Activated CD8-positive, alpha-beta T cell treated with anti-CD3 and anti-CD28 coated beads for 36 hours (primary cell): ENCODE measurements at regions of chr1 and their contacts with region 1.

Region 1: GRCh38 chr1:119885903-119886783 is 10.2 kb downstream of the ADAM30 start:
- DNase-seq: peak; percentile 79
- ATAC-seq: peak; percentile 80
- H3K4me3 Mint-ChIP-seq: no peak overlapping the region
- H3K27ac Mint-ChIP-seq: no peak overlapping the region
- H3K4me1 Mint-ChIP-seq: no peaks in the 10 kb centered on the region
- H3K27me3 Mint-ChIP-seq: peaks cover 15% of the 10 kb centered on the region
- CTCF ChIP-seq: peak; percentile 89

Region 2: DNA sequence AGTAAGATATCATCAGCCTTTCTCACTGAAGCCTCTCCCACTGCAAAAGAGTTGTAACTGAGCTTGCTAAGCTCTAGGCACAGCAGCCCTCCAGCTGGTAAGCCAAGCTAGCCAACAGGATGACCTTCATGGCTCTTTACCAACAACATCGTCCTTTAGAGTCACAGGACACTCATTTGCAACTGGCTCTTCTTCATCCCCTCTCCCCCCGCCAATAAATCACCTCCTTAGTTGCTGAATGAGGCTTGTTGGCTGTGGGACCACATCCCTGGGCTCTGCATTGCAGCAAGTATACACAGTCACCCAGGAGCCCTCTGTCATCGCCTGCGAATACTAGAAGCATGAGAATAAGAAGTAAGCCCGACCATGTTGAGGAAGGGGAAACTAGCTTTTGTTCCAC is 222.1 kb before region 1 on chr1:
- CTCF ChIA-PET with region 1: no interaction called
- POLR2A ChIA-PET with region 1: no interaction called
- intact Hi-C with region 1: no loop called
- DNase-seq: no peak
- ATAC-seq: no peak
- H3K4me3 Mint-ChIP-seq: no peak overlapping the region
- H3K27ac Mint-ChIP-seq: no peak overlapping the region
- H3K4me1 Mint-ChIP-seq: no peaks in the 10 kb centered on the region
- H3K27me3 Mint-ChIP-seq: peaks cover 13% of the 10 kb centered on the region
- CTCF ChIP-seq: no peak

Region 3: DNA sequence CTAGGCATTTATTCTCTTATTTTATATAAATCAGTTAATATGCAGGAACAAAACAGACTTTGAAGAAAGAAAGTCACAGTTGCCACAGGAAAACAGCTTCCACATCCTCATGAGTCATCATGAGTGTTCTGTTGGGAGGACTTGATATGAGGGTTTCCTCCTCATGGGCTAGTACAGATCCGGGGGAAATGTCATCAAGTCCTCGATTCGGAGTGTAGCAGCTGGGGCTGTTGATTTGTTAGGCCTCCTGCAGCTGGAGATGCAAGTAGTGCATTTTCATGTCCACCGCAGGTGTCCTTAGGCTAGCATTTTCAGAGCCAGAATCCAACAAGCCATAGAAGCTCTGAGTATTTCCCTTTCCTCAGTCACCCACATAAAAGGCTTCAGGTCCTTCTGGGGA is 26.5 kb before region 1 on chr1:
- CTCF ChIA-PET with region 1: interaction called, 10 read pairs
- POLR2A ChIA-PET with region 1: interaction called, 3 read pairs
- intact Hi-C with region 1: no loop called
- DNase-seq: peak; percentile 23
- ATAC-seq: peak; percentile 79
- H3K4me3 Mint-ChIP-seq: no peak overlapping the region
- H3K27ac Mint-ChIP-seq: peak overlapping the region; percentile 32
- H3K4me1 Mint-ChIP-seq: peaks cover 12% of the 10 kb centered on the region
- H3K27me3 Mint-ChIP-seq: peaks cover 3% of the 10 kb centered on the region
- CTCF ChIP-seq: no peak

Region 4: DNA sequence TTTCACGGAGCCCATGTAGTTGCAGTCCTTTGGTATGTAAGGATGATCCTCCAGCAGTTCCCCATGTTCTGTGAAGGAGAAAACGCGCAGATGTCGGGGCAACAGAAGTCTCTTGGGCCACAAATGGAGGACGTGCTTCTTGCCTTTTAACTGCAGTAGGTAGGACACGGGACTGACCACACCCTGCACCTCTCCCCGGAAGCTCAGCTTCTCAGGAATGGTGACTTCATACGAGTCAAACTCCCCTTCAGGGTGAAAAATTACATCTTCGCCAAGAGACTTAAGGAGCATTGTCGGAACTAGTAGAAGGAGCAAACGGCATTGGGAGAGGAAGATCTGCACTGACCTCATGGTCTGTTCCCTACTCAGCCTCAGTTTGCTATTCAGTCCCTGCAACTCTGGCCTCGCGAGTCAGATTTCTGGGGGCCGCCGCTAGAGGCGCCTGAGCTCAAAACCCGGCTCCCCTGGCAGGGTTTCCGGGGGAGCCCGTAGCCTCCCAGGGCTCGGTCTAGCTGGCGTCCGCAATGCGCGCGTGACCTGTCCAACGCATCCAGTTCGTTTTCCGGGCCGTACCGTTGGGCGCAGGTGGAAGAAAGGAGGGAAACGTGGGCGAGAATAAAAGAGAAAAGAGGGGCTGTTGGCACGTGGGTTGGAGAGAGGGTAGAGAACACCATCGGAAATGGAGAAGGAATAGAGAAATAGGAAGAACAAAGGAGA is 10.0 kb after region 1 on chr1 and contains the start of gene ADAM30:
- CTCF ChIA-PET with region 1: interaction called, 19 read pairs
- POLR2A ChIA-PET with region 1: no interaction called
- intact Hi-C with region 1: no loop called
- DNase-seq: no peak
- ATAC-seq: no peak
- H3K4me3 Mint-ChIP-seq: no peak within 1 kb of the TSS
- H3K27ac Mint-ChIP-seq: no peak within 1 kb of the TSS
- H3K4me1 Mint-ChIP-seq: peaks cover 12% of the 10 kb centered on the region
- H3K27me3 Mint-ChIP-seq: peaks cover 19% of the 10 kb centered on the region
- CTCF ChIP-seq: no peak
- total RNA-seq, gene ADAM30: not detected